ENCODE measurements at regions of chr17 and their contacts with region 1.

Region 1: GRCh38 chr17:57552114-57552624 is 192.9 kb downstream of the CCDC182 start:
- DNase-seq: no peak
- H3K4me3 ChIP-seq: no peak overlapping the region
- H3K27ac ChIP-seq: no peak overlapping the region
- H3K27me3 ChIP-seq: no peaks in the 10 kb centered on the region
- CTCF ChIP-seq: peak; percentile 63

Region 2: GRCh38 chr17:57523926-57524632 is 28.1 kb before region 1 on chr17:
- CTCF ChIA-PET with region 1: interaction called, 10 read pairs
- POLR2A ChIA-PET with region 1: no interaction called
- DNase-seq: peak; percentile 23
- H3K4me3 ChIP-seq: no peak overlapping the region
- H3K27ac ChIP-seq: peak overlapping the region; percentile 31
- H3K27me3 ChIP-seq: no peaks in the 10 kb centered on the region
- CTCF ChIP-seq: no peak

Region 3: GRCh38 chr17:57537524-57538410 is 14.4 kb before region 1 on chr17:
- CTCF ChIA-PET with region 1: interaction called, 10 read pairs
- POLR2A ChIA-PET with region 1: no interaction called
- DNase-seq: no peak
- H3K4me3 ChIP-seq: no peak overlapping the region
- H3K27ac ChIP-seq: no peak overlapping the region
- H3K27me3 ChIP-seq: no peaks in the 10 kb centered on the region
- CTCF ChIP-seq: no peak

Region 4: GRCh38 chr17:57629470-57629869 is 77.3 kb after region 1 on chr17:
- CTCF ChIA-PET with region 1: no interaction called
- POLR2A ChIA-PET with region 1: no interaction called
- DNase-seq: no peak
- H3K4me3 ChIP-seq: no peak overlapping the region
- H3K27ac ChIP-seq: no peak overlapping the region
- H3K27me3 ChIP-seq: no peaks in the 10 kb centered on the region
- CTCF ChIP-seq: no peak

Measured in AG04450 (cell line).